Activated CD8-positive, alpha-beta T cell treated with anti-CD3 and anti-CD28 coated beads for 36 hours (primary cell): ENCODE measurements at regions of chr2 and their contacts with region 1.

Region 1: GRCh38 chr2:161448431-161448830 is 32.3 kb downstream of the TBR1 start:
- DNase-seq: no peak
- ATAC-seq: no peak
- H3K4me3 Mint-ChIP-seq: no peak overlapping the region
- H3K27ac Mint-ChIP-seq: no peak overlapping the region
- H3K4me1 Mint-ChIP-seq: no peaks in the 10 kb centered on the region
- H3K27me3 Mint-ChIP-seq: peaks cover 9% of the 10 kb centered on the region
- CTCF ChIP-seq: no peak

Region 2: GRCh38 chr2:161432107-161432506 is 16.3 kb before region 1 on chr2:
- CTCF ChIA-PET with region 1: no interaction called
- POLR2A ChIA-PET with region 1: no interaction called
- intact Hi-C with region 1: loop called (anchors 2 kb)
- DNase-seq: no peak
- ATAC-seq: no peak
- H3K4me3 Mint-ChIP-seq: no peak overlapping the region
- H3K27ac Mint-ChIP-seq: no peak overlapping the region
- H3K4me1 Mint-ChIP-seq: peaks cover 7% of the 10 kb centered on the region
- H3K27me3 Mint-ChIP-seq: peaks cover 53% of the 10 kb centered on the region
- CTCF ChIP-seq: no peak

Region 3: GRCh38 chr2:161480123-161480522 is 31.7 kb after region 1 on chr2:
- CTCF ChIA-PET with region 1: no interaction called
- POLR2A ChIA-PET with region 1: no interaction called
- intact Hi-C with region 1: no loop called
- DNase-seq: no peak
- ATAC-seq: no peak
- H3K4me3 Mint-ChIP-seq: no peak overlapping the region
- H3K27ac Mint-ChIP-seq: no peak overlapping the region
- H3K4me1 Mint-ChIP-seq: no peaks in the 10 kb centered on the region
- H3K27me3 Mint-ChIP-seq: peaks cover 13% of the 10 kb centered on the region
- CTCF ChIP-seq: no peak